ENCODE measurements at regions of chrX and their contacts with region 1.

Region 1: DNA sequence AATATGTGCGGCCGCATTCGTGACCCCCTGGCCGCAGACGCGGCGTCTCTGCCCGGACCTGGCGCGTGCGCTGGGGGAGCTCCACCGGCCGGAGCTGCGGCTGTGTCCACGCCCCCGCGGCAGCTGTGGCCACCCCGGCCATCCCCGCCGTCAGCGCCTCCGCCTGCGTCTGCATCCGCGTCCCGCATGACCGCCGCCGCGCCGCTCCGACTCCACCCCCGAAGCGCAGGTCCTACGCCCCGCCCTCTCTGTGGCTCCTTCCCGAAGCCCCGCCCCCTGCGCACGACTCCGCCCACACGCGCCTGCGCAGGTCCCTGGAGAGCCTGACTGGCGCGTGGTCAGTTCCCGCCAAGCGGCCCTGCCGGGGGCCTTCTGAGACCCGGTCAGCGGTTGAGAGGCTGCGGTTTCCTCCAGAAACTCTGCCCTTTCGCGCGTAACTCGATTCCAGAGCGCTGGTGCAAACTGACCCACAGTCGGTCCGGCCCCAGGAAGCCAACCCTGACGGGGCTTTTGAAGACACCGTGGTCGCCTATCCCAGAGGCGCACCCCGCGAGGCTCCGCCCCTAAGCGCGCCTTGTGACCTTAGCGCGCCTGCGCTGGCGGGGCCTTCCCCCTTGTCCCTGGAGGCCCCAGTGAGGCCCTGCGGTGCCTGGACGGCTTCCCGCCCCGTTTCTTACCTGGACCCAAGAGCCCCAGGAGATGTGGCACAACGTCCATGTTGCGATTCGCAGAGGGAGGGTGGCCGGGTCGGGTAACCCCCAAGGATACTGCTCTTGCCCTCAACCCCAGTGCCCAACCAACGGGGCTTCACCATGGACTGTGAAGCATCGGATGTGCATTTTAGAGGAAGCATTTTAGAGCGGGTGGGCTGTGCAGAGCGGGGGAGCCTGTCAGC is at the start of gene LAGE3:
- DNase-seq: peak; percentile 84 to 93 (median 90)
- H3K4me3 ChIP-seq: peak within 1 kb of the TSS; percentile 32 to 71 (median 42)
- H3K4me3 Mint-ChIP-seq: peak within 1 kb of the TSS; percentile 70 to 75
- H3K27ac ChIP-seq: peak within 1 kb of the TSS; percentile 82 to 86
- H3K27ac Mint-ChIP-seq: peak within 1 kb of the TSS; percentile 82 to 94 (median 90)
- H3K4me1 ChIP-seq: peaks cover 17 to 20% of the 10 kb centered on the region in 2 donors
- H3K4me1 Mint-ChIP-seq: peaks cover 10% of the 10 kb centered on the region
- H3K27me3 ChIP-seq: no peaks in the 10 kb centered on the region
- H3K27me3 Mint-ChIP-seq: peaks cover 2 to 24% (median 3%) of the 10 kb centered on the region in 3 donors
- CTCF ChIP-seq: no peak
- polyA plus RNA-seq, gene LAGE3: 12.4 to 30.9 (median 18.6) TPM

Region 2: DNA sequence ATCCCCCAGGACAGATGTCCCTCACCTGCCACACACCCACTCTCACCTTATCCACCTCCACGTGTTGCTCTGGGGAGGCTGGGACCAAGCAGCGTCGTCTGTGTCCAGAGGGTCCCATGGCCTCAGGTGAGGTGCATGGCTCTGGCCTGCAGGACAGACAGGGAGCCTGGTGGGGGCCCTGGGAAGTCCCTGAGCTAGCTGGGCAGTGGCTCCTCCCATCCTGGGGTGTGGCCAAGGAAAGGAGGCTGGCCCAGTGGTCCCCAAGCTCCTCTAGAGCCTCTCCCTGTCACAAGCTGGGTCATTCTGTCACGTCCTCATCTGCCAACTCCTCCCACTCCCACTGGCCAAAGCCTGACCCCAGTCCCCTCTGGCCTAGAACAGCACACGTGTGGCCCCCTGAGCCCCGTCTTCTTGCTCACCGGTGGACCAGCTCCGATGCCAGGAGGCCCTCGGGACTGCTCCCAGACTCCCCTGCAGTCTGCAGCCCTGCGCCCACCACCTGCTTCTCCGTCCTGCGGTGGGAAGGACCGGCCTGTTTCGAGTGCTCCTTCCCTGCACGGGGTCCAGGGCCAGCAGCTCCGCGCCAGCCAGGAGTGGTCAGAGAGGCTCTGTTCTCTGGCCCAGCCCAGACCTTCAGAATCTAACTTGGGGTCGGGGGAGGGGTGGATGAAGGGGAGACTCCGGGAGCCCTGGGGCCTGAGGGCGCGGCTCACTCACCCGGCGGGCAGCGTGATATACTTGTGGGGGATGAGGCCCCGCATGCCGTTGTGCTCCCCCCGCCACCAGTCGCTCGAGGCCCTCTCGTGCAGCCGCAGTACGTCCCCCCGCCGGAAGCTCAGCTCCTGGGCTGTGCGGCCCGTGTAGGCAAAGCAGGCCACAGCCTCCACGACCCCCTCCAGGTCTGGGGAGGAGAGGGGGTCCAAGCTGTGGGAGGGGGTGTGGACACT is 569.7 kb before region 1 on chrX:
- intact Hi-C with region 1: no loop called
- DNase-seq: no peak
- H3K4me3 ChIP-seq: no peak overlapping the region
- H3K4me3 Mint-ChIP-seq: no peak overlapping the region
- H3K27ac ChIP-seq: no peak overlapping the region
- H3K27ac Mint-ChIP-seq: no peak overlapping the region
- H3K4me1 ChIP-seq: peaks cover 12 to 14% of the 10 kb centered on the region in 2 donors
- H3K4me1 Mint-ChIP-seq: peaks cover 15% of the 10 kb centered on the region
- H3K27me3 ChIP-seq: no peaks in the 10 kb centered on the region
- H3K27me3 Mint-ChIP-seq: peaks cover 0 to 37% (median 1%) of the 10 kb centered on the region in 3 donors
- CTCF ChIP-seq: no peak

Region 3: DNA sequence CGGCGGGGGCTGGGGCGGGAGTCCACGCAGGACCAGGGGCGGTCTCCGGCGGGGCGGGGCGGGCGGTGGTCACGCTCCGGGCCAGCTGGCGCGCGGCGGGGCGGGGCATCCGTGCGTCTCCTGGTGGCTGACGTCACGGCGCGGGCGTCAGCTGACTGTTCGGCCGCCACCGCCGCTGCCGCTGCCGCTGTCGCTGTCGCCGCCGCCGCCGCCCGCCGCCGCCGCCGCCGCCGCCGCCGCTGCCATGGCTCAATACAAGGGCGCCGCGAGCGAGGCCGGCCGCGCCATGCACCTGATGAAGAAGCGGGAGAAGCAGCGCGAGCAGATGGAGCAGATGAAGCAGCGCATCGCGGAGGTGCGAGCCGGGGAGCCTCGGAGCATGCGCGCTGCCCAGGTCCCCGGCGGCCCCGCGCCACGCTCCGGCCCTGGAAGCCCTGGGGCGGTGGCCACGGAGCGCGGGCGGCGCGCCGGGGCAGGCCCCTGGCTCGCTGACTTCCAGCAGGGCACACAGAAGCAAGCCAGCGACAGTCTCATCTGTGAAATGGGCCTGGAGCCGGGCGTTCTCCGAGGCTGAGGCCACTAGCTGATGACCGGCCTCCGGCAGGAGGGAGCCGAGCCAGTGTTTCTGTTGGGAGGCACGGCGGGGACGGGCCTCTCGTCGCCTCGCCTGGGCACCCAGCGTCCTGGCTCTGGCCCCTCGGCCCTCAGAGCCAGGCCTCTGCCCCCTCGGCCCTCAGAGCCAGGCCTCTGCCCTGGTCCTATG is 34.8 kb before region 1 on chrX and contains the start of gene FAM50A:
- intact Hi-C with region 1: loop called in 1 of 2 experiments (anchors 5 kb)
- DNase-seq: peak; percentile 69 to 79 (median 72)
- H3K4me3 ChIP-seq: peak within 1 kb of the TSS; percentile 39 to 71 (median 46)
- H3K4me3 Mint-ChIP-seq: peak within 1 kb of the TSS; percentile 68 to 84
- H3K27ac ChIP-seq: peak within 1 kb of the TSS; percentile 25 to 75
- H3K27ac Mint-ChIP-seq: peak within 1 kb of the TSS; percentile 81 to 90 (median 88)
- H3K4me1 ChIP-seq: peaks cover 15 to 20% of the 10 kb centered on the region in 2 donors
- H3K4me1 Mint-ChIP-seq: peaks cover 10% of the 10 kb centered on the region
- H3K27me3 ChIP-seq: no peaks in the 10 kb centered on the region
- H3K27me3 Mint-ChIP-seq: peaks cover 0 to 13% (median 0%) of the 10 kb centered on the region in 3 donors
- CTCF ChIP-seq: no peak
- polyA plus RNA-seq, gene FAM50A: 23.9 to 88.9 (median 46.4) TPM

Region 4: GRCh38 chrX:154515878-154516655 is 37.1 kb after region 1 on chrX and contains the start of gene FAM3A:
- intact Hi-C with region 1: no loop called
- DNase-seq: peak; percentile 77 to 82 (median 81)
- H3K4me3 ChIP-seq: peak within 1 kb of the TSS; percentile 61 to 81 (median 65)
- H3K4me3 Mint-ChIP-seq: peak within 1 kb of the TSS; percentile 84 to 88
- H3K27ac ChIP-seq: peak within 1 kb of the TSS; percentile 83 to 84
- H3K27ac Mint-ChIP-seq: peak within 1 kb of the TSS; percentile 84 to 96 (median 90)
- H3K4me1 ChIP-seq: peaks cover 13 to 14% of the 10 kb centered on the region in 2 donors
- H3K4me1 Mint-ChIP-seq: peaks cover 11% of the 10 kb centered on the region
- H3K27me3 ChIP-seq: no peaks in the 10 kb centered on the region
- H3K27me3 Mint-ChIP-seq: peaks cover 0 to 8% (median 0%) of the 10 kb centered on the region in 3 donors
- CTCF ChIP-seq: no peak
- polyA plus RNA-seq, gene FAM3A: 14.5 to 26.5 (median 16.3) TPM

Measured in CD14-positive monocyte (primary cell).